A549 (cell line): ENCODE measurements at regions of chr12 and their contacts with region 1.

Region 1: GRCh38 chr12:132523576-132524331 is 33.8 kb downstream of the FBRSL1 start:
- DNase-seq: peak; percentile 69 to 92
- ATAC-seq: peak; percentile 64 to 85
- H3K4me3 ChIP-seq: peak overlapping the region; percentile 20; the same call in 2 of the 3 replicates
- H3K27ac ChIP-seq: peak overlapping the region; percentile 69 to 87
- H3K4me1 ChIP-seq: peaks cover 53% of the 10 kb centered on the region
- CTCF ChIP-seq: peak; percentile 72
- EP300 ChIP-seq: no peak
- POLR2A ChIP-seq: no peak
- RAD21 ChIP-seq: peak; percentile 52 to 57; a peak in 4 of 5 replicates

Region 2: DNA sequence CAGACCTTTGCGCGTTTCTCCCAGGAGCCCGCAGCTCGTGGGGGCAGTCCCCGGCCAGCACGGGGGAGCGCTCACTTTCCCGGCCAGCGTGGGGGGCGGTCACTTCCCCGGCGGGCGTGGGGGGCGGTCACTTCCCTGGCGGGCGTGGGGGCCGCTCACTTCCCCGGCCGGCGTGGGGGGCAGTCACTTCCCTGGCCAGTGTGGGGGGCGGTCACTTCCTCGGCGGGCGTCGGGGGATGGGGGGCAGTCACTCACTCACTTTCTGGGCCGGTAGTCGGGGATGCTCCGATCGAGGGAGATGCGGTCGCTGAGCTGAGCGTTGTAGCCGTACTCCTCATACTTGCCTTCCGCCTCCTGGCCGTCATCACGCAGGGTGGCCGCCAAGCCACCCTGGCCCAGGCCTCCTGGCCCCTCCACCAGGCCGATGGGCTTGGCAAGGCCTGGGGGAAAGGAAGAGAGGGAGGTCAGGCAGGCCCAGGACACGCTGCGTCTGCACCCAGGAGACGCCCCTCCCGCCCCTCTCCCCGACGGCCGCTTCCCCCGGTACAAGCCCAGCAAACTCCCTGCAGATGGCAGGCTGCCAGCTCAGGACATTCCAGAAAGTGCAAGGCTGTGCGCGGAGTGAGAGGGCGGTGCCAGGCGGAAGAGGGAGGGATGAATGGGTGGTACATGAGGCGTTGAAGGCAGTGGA is 237.6 kb before region 1 on chr12:
- CTCF ChIA-PET with region 1: no interaction called
- POLR2A ChIA-PET with region 1: no interaction called
- DNase-seq: peak in 1 of 2 experiments; percentile 56
- ATAC-seq: peak in 1 of 2 experiments; percentile 57; a peak in 3 of 6 replicates
- H3K4me3 ChIP-seq: no peak overlapping the region
- H3K27ac ChIP-seq: peak overlapping the region; percentile 30 to 80; a peak in 4 of 6 replicates
- H3K4me1 ChIP-seq: peaks cover 39% of the 10 kb centered on the region
- CTCF ChIP-seq: no peak
- EP300 ChIP-seq: no peak
- POLR2A ChIP-seq: no peak
- RAD21 ChIP-seq: no peak

Region 3: DNA sequence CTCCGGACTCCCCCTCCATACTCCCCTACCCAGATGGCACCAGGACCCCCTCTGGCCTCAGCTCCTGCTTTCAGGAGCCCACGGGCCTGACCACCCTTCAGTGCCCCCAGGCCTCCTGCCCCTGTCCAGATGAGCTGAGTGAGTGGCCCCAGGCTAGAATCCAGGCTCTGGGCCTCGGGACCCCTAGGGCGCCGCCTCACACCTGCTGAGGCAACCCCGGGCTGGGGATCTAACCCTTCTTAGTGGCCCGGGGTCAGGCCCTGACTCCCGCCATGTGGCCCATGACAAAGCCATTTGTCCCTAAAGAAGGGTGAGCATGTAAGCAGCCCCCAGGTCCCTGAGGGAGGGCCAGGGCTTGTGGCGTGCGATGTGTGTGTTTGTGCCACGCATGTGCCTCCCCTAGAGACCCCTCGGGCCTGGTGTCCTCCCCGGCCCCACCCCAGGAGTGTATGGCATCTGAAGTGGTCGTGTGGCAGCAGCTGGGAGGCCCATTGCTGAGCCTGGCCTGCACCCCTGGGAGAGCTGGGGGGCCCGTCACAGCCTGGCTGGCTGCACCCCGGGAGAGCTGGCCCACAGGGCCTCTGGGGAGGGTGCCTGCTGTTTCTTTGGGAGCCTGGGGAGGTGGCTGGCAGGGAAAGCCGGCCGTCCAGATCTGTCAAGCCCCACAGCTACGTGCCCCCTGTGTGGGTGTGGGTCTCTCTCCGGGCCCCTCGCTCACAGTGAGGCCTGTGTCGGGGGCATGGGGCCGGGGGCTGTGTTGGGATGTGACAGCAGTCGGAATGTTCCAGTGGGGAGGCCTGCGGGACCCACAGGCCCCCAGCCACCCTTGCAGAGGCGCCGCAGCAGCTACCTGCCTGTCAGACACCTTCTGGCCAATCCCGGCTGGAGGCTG is 26.0 kb before region 1 on chr12:
- CTCF ChIA-PET with region 1: interaction called, 9 read pairs
- POLR2A ChIA-PET with region 1: interaction called, 11 read pairs
- DNase-seq: no peak
- ATAC-seq: no peak
- H3K4me3 ChIP-seq: no peak overlapping the region
- H3K27ac ChIP-seq: no peak overlapping the region
- H3K4me1 ChIP-seq: peaks cover 19% of the 10 kb centered on the region
- CTCF ChIP-seq: no peak
- EP300 ChIP-seq: no peak
- POLR2A ChIP-seq: no peak
- RAD21 ChIP-seq: no peak

Region 4: GRCh38 chr12:132506328-132507160 is 17.2 kb before region 1 on chr12:
- CTCF ChIA-PET with region 1: interaction called, 25 read pairs
- POLR2A ChIA-PET with region 1: no interaction called
- DNase-seq: no peak
- ATAC-seq: no peak
- H3K4me3 ChIP-seq: no peak overlapping the region
- H3K27ac ChIP-seq: no peak overlapping the region
- H3K4me1 ChIP-seq: peaks cover 20% of the 10 kb centered on the region
- CTCF ChIP-seq: no peak
- EP300 ChIP-seq: no peak
- POLR2A ChIP-seq: no peak
- RAD21 ChIP-seq: no peak

Region 5: DNA sequence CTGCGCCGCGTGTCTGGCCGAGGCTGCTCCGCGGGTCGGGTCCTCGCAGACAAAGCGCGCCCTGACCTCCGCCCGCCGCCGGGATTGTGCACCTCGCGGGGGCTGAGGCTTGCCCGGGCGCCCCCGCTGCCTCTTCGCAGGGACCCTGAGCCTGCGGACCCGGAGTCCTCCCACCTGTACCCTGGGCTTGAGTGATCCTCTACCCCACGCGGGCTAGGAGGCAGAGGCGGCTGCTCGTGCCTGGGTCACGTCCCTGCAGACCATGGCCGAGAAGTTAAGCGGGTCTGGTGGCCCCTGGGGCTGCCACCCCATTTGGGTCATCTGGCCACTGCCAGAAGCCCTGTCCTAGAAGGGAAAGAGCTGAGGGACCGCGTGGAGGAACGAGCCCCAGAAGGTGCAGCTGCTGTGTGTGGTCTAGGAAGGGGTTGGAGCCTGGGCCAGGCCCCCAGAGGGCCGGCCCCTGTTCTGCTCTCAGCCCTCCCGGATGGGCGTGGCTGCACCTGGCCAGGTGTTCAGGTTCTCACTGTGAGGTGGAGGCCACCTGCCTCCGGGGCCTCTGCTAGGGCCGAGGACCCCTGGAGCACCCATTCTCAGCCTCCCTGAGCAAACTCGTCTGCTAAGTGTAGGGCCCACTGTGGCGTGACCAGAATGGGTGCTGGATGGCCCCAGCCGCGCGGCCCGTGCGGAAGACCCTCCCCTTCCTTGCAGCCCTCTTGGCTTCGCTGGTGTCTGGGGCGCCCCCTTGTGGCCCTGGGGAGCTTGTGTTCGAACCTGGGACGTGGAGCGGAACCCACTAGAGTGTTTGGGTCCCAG is 37.1 kb after region 1 on chr12:
- CTCF ChIA-PET with region 1: interaction called, 11 read pairs
- POLR2A ChIA-PET with region 1: interaction called, 3 read pairs
- DNase-seq: peak; percentile 82 to 89
- ATAC-seq: peak; percentile 54 to 83
- H3K4me3 ChIP-seq: peak overlapping the region; percentile 91
- H3K27ac ChIP-seq: peak overlapping the region; percentile 80 to 91; a peak in 5 of 6 replicates
- H3K4me1 ChIP-seq: peaks cover 10% of the 10 kb centered on the region; the same call in 2 of the 3 replicates
- CTCF ChIP-seq: peak; percentile 79
- EP300 ChIP-seq: no peak
- POLR2A ChIP-seq: no peak
- RAD21 ChIP-seq: peak; percentile 57 to 61